ENCODE measurements at regions of chr4 and their contacts with region 1.

Region 1: GRCh38 chr4:68375667-68376559 is 26.0 kb upstream of the YTHDC1 start:
- DNase-seq: peak in 8 of 9 donors; percentile 24 to 75 (median 64)
- ATAC-seq: peak; percentile 90
- H3K4me3 ChIP-seq: peak overlapping the region; percentile 23
- H3K4me3 Mint-ChIP-seq: peak overlapping the region; percentile 74 to 90 (median 82)
- H3K27ac ChIP-seq: no peak overlapping the region
- H3K27ac Mint-ChIP-seq: no peak overlapping the region
- H3K4me1 ChIP-seq: no peaks in the 10 kb centered on the region
- H3K4me1 Mint-ChIP-seq: peaks cover 5 to 18% (median 15%) of the 10 kb centered on the region in 7 donors
- H3K27me3 ChIP-seq: no peaks in the 10 kb centered on the region
- H3K27me3 Mint-ChIP-seq: peaks cover 0 to 41% (median 1%) of the 10 kb centered on the region in 5 donors

Region 2: GRCh38 chr4:67988991-67989390 is 386.9 kb before region 1 on chr4:
- CTCF ChIA-PET with region 1: no interaction called
- POLR2A ChIA-PET with region 1: no interaction called
- intact Hi-C with region 1: loop called in 1 of 2 experiments (anchors 5 kb)
- DNase-seq: no peak
- ATAC-seq: no peak
- H3K4me3 ChIP-seq: no peak overlapping the region
- H3K4me3 Mint-ChIP-seq: no peak overlapping the region
- H3K27ac ChIP-seq: no peak overlapping the region
- H3K27ac Mint-ChIP-seq: no peak overlapping the region
- H3K4me1 ChIP-seq: no peaks in the 10 kb centered on the region
- H3K4me1 Mint-ChIP-seq: peaks cover 0 to 12% (median 0%) of the 10 kb centered on the region in 7 donors
- H3K27me3 ChIP-seq: no peaks in the 10 kb centered on the region
- H3K27me3 Mint-ChIP-seq: peaks cover 5 to 13% (median 12%) of the 10 kb centered on the region in 5 donors

Region 3: GRCh38 chr4:68271851-68272756 is 103.8 kb before region 1 on chr4:
- CTCF ChIA-PET with region 1: interaction called, 52 read pairs
- POLR2A ChIA-PET with region 1: no interaction called
- intact Hi-C with region 1: loop called (anchors 1 kb)
- DNase-seq: peak in 6 of 9 donors; percentile 11 to 53 (median 40)
- ATAC-seq: peak; percentile 75
- H3K4me3 ChIP-seq: no peak overlapping the region
- H3K4me3 Mint-ChIP-seq: peak overlapping the region in 9 of 10 donors; percentile 18 to 57 (median 43)
- H3K27ac ChIP-seq: no peak overlapping the region
- H3K27ac Mint-ChIP-seq: no peak overlapping the region
- H3K4me1 ChIP-seq: no peaks in the 10 kb centered on the region
- H3K4me1 Mint-ChIP-seq: peaks cover 0 to 12% (median 0%) of the 10 kb centered on the region in 7 donors
- H3K27me3 ChIP-seq: no peaks in the 10 kb centered on the region
- H3K27me3 Mint-ChIP-seq: peaks cover 0 to 16% (median 12%) of the 10 kb centered on the region in 5 donors

Region 4: DNA sequence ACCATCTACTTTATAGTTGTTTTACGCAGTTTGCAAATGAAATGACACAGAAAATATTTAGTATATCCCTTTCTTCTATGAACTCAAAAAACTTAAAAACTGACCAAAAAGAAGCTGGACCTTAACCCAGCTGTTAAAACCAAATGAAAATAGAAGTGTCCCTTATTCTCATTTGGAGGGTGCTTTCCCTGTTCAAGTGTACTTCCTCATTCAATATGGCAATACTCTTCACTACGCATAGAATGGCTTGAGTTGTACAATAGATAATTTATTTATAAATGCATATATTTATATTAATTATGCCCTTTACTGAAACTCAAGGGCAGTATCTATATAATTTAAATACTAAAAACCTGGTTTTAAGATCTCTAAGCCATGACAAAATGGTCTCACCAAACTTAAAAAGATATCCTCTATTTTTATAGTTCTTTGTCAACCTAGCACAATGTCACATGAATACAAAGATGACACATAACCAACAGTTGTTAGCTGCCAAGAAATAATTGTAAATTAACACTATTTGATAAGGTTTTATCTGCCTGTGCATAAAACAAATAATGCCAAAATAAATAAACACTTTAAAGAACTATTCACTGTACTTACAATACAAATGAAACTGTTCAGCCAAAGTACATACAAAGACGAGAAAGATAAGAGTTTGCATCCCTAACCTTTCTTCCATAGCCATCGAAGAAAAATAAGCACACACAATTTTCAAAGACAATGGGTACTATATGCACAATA is 51.2 kb before region 1 on chr4:
- CTCF ChIA-PET with region 1: no interaction called
- POLR2A ChIA-PET with region 1: no interaction called
- intact Hi-C with region 1: loop called in 1 of 2 experiments (anchors 1 kb)
- DNase-seq: no peak
- ATAC-seq: no peak
- H3K4me3 ChIP-seq: no peak overlapping the region
- H3K4me3 Mint-ChIP-seq: no peak overlapping the region
- H3K27ac ChIP-seq: no peak overlapping the region
- H3K27ac Mint-ChIP-seq: peak overlapping the region in 4 of 9 donors; percentile 1 to 55 (median 12)
- H3K4me1 ChIP-seq: no peaks in the 10 kb centered on the region
- H3K4me1 Mint-ChIP-seq: peaks cover 0 to 13% (median 9%) of the 10 kb centered on the region in 7 donors
- H3K27me3 ChIP-seq: no peaks in the 10 kb centered on the region
- H3K27me3 Mint-ChIP-seq: no peaks in the 10 kb centered on the region

Region 5: DNA sequence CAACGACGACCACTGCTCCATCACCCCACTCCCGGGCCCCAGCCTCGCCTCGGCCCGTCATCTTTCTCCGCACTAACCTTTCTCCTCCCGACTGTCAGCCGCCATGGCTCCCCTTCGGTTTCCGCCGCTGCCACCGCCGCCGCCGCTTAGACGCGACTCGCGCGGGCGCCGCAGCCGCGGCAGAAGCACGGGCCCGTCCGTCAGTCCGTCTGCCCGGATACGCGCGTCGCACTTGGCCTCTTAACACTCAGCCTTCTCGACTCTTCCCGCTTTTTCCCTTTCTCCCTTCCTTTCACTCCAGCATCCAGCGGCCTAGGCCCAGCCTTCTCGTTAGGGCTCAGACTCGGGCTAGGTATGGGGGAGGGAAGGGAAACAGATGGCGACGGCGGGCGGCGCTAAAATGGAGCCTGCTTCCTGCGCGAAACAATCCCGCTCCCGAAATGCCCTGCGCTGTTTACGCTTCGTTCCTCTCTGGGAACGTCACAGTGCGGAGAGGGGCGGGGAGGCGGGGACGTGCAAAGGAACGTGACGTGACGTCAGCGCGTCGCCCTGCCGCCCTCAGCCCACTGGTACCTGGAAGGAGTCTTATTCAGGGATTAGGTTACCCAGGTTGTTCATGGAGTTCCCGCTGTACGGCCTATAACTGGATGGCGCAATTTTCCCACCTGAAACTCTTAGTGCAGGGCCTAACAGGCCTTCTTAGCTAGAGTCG is 26.1 kb before region 1 on chr4 and contains the start of gene YTHDC1:
- CTCF ChIA-PET with region 1: interaction called, 4 read pairs
- POLR2A ChIA-PET with region 1: interaction called, 4 read pairs
- intact Hi-C with region 1: loop called (anchors 1 kb)
- DNase-seq: peak; percentile 84 to 97 (median 95)
- ATAC-seq: peak; percentile 97
- H3K4me3 ChIP-seq: peak within 1 kb of the TSS; percentile 100
- H3K4me3 Mint-ChIP-seq: peak within 1 kb of the TSS; percentile 94 to 100 (median 98)
- H3K27ac ChIP-seq: peak within 1 kb of the TSS; percentile 96
- H3K27ac Mint-ChIP-seq: peak within 1 kb of the TSS; percentile 97 to 100 (median 100)
- H3K4me1 ChIP-seq: peaks cover 26 to 35% of the 10 kb centered on the region in 2 donors
- H3K4me1 Mint-ChIP-seq: peaks cover 16 to 48% (median 41%) of the 10 kb centered on the region in 7 donors
- H3K27me3 ChIP-seq: no peaks in the 10 kb centered on the region
- H3K27me3 Mint-ChIP-seq: peaks cover 0 to 20% (median 0%) of the 10 kb centered on the region in 5 donors
- total RNA-seq, gene YTHDC1: 99.4 to 254 (median 219) TPM

Region 6: GRCh38 chr4:68433582-68433981 is 57.7 kb after region 1 on chr4:
- CTCF ChIA-PET with region 1: no interaction called
- POLR2A ChIA-PET with region 1: no interaction called
- intact Hi-C with region 1: loop called (anchors 2 to 5 kb)
- DNase-seq: no peak
- ATAC-seq: no peak
- H3K4me3 ChIP-seq: no peak overlapping the region
- H3K4me3 Mint-ChIP-seq: no peak overlapping the region
- H3K27ac ChIP-seq: no peak overlapping the region
- H3K27ac Mint-ChIP-seq: peak overlapping the region in 1 of 9 donors; percentile 60
- H3K4me1 ChIP-seq: peaks cover 10 to 22% of the 10 kb centered on the region in 2 donors
- H3K4me1 Mint-ChIP-seq: peaks cover 20 to 54% (median 34%) of the 10 kb centered on the region in 7 donors
- H3K27me3 ChIP-seq: no peaks in the 10 kb centered on the region
- H3K27me3 Mint-ChIP-seq: no peaks in the 10 kb centered on the region